ENCODE measurements at regions of chr14 and their contacts with region 1.

Region 1: DNA sequence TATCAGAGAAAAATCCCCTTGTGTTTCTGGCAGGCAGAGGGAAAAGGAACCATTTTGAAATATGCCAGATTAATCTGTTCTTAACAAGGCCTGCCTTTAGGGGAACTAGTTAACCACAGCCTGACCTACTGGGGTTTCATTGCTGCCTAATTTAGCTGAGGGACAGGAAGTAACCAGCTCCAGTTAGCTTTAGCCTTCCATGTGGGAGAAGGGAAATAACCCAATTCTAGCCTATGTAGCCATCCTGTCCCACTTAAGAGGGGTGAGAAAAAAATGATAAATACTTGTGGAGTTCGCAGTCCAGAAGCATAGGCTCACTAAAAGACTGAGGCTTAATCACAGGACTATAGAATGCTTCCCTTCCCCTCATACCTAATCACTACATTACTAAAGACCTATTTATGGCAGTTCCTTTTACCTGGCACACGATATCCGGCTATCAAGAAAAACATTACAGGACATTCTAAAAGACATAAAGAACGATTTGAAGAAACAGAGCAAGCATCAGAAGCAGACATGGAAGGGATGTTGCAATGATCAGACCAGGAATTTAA is 22.8 kb downstream of the COX8C start:
- DNase-seq: no peak
- ATAC-seq: no peak

Region 2: GRCh38 chr14:93220509-93220908 is 149.3 kb before region 1 on chr14:
- intact Hi-C with region 1: loop called (anchors 10 kb)
- DNase-seq: no peak
- ATAC-seq: no peak

Region 3: DNA sequence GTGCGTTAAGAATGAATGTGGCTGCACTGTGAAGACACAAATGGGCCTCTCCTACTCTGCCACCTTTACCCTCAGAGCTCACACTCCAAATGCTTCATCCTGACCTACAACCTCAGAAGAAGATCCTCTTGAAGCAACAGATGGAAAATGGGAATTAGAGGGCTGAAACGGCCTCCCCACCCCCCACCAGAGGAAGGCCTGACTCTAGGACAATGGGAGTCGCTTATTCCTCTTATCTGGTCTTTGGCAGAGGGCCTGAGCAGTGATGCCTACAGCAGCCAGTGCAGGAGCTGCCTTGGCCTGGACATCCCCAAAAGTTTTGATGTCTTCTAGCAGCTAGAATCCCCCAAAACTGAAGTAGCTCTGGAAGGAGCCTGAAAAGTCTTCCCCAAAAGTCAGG is 66.1 kb before region 1 on chr14:
- intact Hi-C with region 1: no loop called
- DNase-seq: no peak
- ATAC-seq: no peak

Region 4: DNA sequence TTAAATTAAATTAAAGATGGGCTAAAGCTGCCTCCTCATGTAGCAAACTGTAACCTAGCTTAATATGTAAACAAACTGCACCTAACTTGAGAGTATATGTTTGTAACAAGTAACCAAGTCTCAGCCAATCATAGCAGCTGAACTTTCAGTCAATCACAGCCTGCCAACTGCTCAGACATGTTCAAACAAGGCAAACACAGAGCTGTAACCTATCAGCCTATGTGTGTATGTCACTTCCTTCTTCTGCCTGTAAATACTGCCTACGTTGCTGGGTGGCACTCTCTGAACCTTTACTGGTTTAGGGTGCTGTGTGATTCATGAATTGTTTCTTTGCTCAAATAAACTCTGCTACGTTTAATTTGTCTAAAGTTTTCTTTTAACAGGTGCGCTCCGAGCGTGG is 950.5 kb after region 1 on chr14:
- intact Hi-C with region 1: no loop called
- DNase-seq: no peak
- ATAC-seq: no peak

Measured in sciatic nerve (tissue), 2 donors.